ENCODE measurements at regions of chr19 and their contacts with region 1.

Region 1: DNA sequence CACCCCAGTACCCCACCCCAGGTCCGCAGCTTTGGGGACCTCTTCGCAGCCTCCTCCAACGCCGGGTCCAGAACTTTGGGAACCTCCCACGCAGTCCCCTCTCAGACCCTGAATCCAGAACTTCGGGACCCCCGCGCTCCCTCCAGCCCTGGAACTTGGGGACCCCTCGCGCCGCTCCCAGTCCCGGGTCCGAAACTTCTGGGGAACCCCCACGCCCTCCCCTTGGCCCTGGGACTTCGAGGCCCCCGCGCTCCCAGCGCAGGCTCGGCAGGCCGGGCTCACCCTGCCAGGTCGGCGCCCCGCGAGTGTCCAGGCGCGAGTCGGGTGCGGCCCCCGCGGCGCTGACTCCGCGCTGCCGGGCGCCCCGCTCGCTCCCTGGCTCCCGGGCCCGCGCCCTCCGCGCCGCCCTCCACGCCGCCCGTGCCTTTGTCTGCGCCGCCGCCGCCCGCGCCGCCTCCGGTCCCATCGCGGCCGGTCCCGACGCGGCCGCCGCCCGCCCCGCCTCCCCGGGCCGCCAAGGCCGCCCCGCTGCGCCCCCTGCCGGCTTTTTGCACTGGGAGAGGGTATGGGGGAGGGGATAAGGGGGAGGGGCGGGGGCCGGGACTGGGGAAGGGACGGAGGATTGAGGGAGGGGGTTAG is at the start of gene HOMER3:
- DNase-seq: peak; percentile 87
- H3K4me3 ChIP-seq: peak within 1 kb of the TSS; percentile 63 to 87 (median 83)
- H3K27ac ChIP-seq: peak within 1 kb of the TSS; percentile 57 to 76 (median 67)
- H3K4me1 ChIP-seq: peaks cover 0 to 21% (median 11%) of the 10 kb centered on the region in 4 donors
- H3K27me3 ChIP-seq: no peaks in the 10 kb centered on the region
- CTCF ChIP-seq: peak in 1 of 4 experiments; percentile 39
- EP300 ChIP-seq: no peak
- POLR2A ChIP-seq: no peak
- total RNA-seq, gene HOMER3: 15.7 to 36.3 (median 31.8) TPM

Region 2: DNA sequence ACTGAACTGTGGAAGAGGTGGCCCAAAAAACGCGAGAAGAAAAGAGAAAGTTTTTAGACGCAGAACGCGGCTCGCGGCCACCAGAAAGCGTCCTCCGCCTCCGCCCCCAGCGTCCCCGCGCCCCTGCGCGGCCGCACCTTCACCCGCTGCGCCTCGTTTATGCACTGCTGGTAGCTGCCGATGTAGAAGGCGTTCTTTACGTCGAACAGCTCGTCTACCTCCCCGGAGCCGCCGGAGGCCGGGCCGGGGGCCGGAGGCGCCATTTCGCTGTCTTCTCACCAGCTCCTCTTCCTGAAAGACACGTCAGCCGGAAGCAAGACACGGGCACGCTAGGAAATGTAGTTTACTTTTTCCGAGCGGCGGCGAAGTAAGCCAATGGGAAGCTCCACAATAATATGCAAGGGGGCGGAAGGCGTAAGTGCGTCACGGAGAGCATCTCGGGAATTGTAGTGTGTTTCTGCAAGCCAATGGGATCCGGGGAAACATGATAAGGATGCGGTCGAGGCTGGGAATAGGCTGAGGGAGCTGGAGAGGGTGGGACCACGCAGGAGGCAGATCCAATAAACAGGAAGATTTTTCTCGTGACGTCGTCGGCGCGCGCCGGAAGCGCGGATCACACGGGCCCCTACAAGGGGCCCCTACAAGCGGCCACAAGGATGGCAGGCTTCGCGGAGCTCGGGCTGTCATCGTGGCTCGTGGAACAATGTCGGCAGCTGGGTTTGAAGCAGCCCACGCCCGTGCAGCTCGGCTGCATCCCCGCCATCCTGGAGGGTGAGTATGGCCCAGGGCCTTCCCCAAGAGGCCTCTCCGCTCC is 21.6 kb before region 1 on chr19 and contains the starts of genes COPE and DDX49:
- intact Hi-C with region 1: loop called (anchors 2 kb)
- DNase-seq: peak; percentile 99
- H3K4me3 ChIP-seq: peak within 1 kb of the TSS; percentile 80 to 96 (median 86)
- H3K27ac ChIP-seq: peak within 1 kb of the TSS; percentile 87 to 93 (median 90)
- H3K4me1 ChIP-seq: peaks cover 0 to 44% (median 26%) of the 10 kb centered on the region in 4 donors
- H3K27me3 ChIP-seq: no peaks in the 10 kb centered on the region
- CTCF ChIP-seq: no peak
- EP300 ChIP-seq: peak in 1 of 4 donors; percentile 21
- POLR2A ChIP-seq: peak; percentile 82 to 92
- total RNA-seq, gene COPE: 130 to 198 (median 157) TPM
- total RNA-seq, gene DDX49: 32.7 to 39.6 (median 38.4) TPM

Region 3: DNA sequence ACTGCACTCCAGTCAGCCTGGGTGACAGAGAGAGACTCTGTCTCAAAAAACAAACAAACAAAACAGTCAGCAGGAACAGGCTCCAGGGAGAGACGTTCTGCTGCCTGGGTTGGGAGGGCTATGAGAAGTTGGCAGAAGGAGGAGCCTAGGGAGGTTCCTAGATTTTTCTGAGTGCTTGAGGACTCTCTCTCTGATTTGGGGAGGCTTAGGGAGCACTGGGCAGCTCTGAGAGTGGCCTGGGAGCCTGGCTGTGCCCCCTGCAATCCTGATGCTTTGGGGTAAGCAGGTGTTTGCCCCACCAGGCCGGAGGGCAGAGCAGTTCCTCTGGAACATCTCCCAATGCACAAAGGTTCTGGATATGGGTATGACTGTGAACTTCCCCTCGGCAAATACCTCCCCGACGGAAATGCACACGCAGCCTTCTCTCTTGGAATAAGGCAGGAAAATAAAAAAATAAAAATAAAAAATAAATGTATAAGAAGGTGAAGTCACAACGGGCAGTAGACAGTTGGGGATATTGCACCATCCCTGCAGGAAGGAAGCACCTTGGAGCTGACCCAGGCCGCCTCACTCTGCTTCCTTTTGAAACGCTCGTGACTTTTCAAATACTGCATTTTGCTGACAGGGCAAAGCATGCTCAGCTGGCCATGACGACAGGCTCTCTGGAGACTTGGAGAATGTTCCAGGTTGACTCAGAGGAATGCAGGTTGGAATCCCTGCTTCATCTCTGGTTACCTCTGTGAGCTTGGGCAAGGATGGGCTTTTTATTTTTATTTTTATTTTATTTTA is 26.7 kb after region 1 on chr19:
- intact Hi-C with region 1: no loop called
- DNase-seq: peak; percentile 86
- H3K4me3 ChIP-seq: no peak overlapping the region
- H3K27ac ChIP-seq: peak overlapping the region; percentile 42 to 71 (median 58)
- H3K4me1 ChIP-seq: peaks cover 0 to 17% (median 0%) of the 10 kb centered on the region in 4 donors
- H3K27me3 ChIP-seq: peaks cover 0 to 4% (median 0%) of the 10 kb centered on the region in 3 donors
- CTCF ChIP-seq: no peak
- EP300 ChIP-seq: peak in 1 of 4 donors; percentile 54
- POLR2A ChIP-seq: no peak

Region 4: DNA sequence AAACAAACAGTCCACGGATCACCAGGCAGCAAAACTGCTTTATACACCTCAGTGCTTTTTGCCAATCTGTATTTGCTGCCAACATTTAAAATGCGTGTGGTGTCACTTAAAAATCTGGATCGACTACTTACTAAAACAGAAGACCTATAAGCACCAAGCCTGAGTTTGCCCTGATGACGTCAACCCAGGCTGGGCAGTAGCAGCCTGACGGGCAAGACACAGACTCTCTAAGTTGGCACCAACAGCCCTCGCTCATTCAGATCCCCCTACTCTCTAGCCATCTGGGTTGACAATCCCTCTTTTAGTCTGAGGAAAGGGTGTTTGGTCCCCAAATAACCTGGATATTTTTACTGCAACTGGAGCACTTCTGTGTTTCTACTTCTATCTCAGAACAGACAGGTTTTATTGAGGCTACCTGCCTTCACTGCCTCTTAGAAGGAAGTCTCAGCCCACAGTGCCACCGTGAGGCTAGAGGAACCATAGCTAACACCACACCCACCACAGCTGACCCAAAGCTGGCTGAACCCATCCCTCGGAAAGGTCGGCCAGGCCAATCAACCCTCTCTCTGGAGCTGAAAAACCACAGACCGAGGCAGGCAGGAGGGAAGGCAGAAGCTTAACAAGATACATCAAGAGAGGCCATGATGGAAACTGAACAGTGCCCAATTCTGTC is 85.5 kb after region 1 on chr19:
- intact Hi-C with region 1: no loop called
- DNase-seq: no peak
- H3K4me3 ChIP-seq: no peak overlapping the region
- H3K27ac ChIP-seq: no peak overlapping the region
- H3K4me1 ChIP-seq: peaks cover 0 to 9% (median 4%) of the 10 kb centered on the region in 4 donors
- H3K27me3 ChIP-seq: no peaks in the 10 kb centered on the region
- CTCF ChIP-seq: no peak
- EP300 ChIP-seq: no peak
- POLR2A ChIP-seq: no peak

Measured in sigmoid colon (tissue), 7 donors.